ENCODE measurements at regions of chr1 and their contacts with region 1.

Region 1: GRCh38 chr1:29924017-29924431 is 687.7 kb downstream of the PTPRU start:
- DNase-seq: no peak
- H3K4me3 ChIP-seq: no peak overlapping the region
- H3K27ac ChIP-seq: no peak overlapping the region
- H3K4me1 ChIP-seq: no peaks in the 10 kb centered on the region
- H3K27me3 ChIP-seq: peaks cover 5% of the 10 kb centered on the region
- CTCF ChIP-seq: no peak
- EP300 ChIP-seq: no peak
- POLR2A ChIP-seq: no peak

Region 2: DNA sequence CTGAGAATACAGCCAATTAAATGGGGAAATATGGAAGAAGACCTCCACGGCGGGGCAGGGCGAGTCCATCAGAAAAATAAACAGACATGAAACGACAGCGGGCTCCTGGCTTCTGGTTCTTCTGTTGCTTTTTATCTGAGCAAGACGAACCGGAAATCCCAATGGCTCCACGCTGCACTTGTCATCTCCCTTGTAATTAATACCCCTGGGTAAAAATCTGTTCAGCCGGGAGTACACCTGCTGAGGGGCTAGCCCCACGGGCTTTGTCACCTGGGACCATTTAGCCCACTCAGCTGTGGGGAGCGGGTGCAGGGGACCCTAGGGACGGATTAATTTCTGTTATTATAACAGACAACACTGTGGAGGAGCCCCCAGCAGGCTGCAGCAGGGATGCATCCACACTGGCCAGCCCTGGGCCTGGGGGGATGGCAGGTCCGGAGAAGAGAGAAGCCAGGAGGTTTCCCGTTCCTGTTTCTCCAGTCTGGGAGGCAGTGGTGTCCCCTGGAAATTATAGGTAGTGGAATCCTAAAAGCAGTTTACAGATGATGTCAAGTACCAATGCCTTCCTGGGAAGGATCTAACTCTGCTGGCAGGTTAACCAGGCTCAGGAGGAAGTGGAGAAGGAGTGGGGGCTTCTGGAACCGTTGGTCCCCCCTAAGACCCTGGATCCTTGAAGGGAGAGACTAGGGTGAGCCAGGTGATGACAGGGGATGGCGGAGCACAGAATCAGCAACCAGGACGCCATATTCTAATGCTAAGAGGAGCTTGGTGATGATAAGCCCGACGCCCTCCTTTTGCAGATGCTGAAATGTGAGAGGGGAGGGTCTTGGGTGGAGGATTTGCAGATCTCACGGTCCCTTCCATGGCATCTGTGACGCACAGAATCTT is 121.6 kb before region 1 on chr1:
- in situ Hi-C with region 1: no loop called
- intact Hi-C with region 1: no loop called
- DNase-seq: no peak
- H3K4me3 ChIP-seq: no peak overlapping the region
- H3K27ac ChIP-seq: no peak overlapping the region
- H3K4me1 ChIP-seq: no peaks in the 10 kb centered on the region
- H3K27me3 ChIP-seq: peaks cover 23% of the 10 kb centered on the region
- CTCF ChIP-seq: no peak
- EP300 ChIP-seq: no peak
- POLR2A ChIP-seq: no peak

Region 3: DNA sequence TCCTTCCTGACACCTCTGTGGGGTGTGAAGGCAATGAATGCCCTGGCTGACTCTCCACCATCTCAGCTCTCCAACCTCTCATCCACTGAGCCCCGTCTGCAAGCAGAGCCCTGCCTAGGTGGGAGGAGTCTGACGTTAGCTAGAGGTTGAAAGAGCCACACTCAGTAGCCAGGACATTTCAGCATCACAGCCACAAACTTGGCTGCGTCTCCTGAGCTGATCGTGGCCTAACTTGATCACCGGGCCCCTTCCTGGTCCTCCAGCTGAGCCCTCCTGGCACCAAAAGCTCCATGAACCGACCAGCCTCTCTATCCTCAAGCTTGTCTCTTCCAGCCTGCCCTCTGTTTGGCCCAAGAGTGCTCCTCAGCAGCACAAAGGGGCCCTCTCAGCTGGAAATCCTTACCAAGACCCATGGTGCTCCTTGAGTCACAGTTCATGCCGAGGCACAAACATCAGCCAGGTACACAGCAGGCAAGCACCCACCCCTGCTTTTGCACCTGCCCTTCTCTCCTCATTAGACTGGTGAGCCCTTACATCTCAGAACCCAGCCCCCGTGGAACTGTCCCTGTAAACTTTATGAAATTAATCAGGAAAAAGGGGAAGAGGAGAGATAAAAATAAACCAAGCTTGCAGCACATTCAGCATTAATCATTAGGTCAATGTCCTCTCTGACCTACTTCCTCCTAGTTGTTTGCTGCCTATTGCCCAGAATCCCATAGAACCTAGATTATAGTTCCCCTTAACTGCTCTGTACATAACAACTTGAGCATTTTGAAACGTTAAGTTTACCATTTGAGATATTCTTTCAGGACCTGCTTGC is 60.7 kb after region 1 on chr1:
- in situ Hi-C with region 1: loop called in 1 of 4 experiments (anchors 10 kb)
- intact Hi-C with region 1: no loop called
- DNase-seq: peak; percentile 27
- H3K4me3 ChIP-seq: no peak overlapping the region
- H3K27ac ChIP-seq: peak overlapping the region in 3 of 4 donors; percentile 34 to 60 (median 37)
- H3K4me1 ChIP-seq: no peaks in the 10 kb centered on the region
- H3K27me3 ChIP-seq: peaks cover 8% of the 10 kb centered on the region
- CTCF ChIP-seq: no peak
- EP300 ChIP-seq: no peak
- POLR2A ChIP-seq: no peak